GM13976 (cell line): ENCODE measurements at regions of chr20 and their contacts with region 1.

Region 1: DNA sequence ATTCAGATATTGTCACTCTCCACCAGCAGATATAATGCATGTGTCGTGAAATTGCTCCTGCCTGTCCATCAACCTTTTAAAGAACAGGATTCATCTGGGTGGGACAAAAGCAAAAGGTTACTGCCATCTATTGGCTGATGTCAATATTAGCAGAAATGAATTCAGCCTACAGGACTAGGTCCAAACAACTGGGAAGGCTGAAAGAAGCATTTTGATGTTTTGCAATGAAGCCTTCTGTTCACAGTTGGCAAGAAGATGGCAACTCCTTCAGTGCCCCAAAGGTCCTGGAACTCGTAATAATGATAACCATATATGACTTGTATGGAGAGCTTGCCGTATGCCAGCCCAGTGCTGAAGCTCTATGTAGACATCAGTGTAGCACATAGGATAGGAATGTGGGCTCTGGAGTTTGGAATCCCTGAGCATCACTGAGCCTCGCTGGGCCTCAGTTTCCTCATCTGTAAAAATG is 7.5 kb downstream of the BCAS1 start:
- DNase-seq: peak; percentile 60
- CTCF ChIP-seq: peak; percentile 20

Region 2: DNA sequence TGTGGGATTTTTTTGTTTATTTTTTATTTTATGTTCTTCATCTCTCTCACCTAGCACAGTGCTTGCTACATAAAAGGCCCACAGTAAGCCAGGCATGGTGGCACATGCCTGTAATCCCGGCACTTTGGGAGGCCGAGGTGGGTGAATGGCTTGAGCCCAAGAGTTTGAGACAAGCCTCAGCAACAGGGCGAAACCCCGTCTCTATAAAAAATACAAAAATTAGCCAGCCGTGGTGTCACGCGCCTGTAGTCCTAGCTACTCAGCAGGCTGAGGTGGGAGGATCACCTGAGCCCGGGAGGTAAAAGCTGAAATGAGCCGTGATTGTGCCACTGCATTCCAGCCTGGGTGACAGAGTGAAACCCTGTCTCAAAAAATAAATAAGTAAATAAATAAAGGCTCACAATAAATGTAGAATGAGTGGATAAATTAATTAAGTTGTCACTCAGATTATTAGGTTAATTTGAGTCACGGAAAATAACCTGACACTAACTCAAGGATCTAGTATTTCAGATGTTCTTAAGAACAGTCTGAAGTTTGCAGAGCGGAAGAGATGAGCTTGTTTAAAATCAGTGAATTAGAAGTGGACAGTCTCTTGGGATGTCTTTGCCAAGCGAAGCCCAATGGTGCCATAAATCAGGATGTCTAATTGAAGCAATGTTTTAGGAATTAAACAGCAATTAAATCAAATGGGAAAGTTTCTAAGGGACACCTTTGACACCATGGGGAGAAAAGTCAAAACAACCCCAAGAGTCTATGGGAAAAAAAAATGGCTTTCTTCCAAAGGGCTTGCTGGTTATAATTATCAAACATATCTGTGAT is 683.6 kb before region 1 on chr20:
- in situ Hi-C with region 1: no loop called
- DNase-seq: no peak
- CTCF ChIP-seq: no peak

Region 3: DNA sequence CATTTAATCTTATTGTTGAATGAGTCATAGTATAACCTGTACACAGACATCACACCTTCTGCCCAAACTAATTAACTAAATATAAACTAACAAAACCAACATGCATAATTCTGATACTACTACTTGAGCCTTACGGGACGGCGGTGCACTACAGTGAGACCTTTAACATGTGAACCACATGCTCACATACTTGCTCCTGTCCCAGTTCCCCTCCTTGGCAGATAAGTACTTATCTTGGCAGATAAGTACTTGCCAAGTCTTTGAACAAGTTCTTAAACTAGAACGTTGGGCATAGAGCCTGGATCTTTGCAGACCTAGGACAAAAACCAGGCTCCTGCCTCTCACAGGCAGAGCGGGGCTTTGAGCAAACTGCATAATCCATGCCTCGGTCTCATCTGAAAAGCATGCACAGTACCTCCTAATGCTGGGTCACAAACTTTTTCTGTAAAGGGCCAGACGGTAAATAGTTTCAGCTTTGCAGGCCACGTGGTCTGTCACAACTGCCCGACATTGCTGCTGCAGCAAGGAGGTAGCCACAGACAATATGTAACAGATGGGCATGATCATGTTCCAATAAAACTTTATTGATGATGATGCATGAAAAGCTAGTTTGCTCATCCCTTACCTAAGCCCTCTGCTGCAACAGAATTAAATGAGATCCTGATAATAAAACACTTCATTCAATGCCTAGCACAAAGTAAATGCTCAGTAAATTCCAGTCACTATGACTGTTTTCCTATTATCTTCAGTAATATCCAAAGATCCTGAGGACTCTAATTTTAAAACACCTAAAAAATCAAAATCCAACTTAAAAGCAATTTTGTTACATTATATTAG is 492.1 kb before region 1 on chr20:
- in situ Hi-C with region 1: loop called (anchors 25 kb)
- DNase-seq: no peak
- CTCF ChIP-seq: no peak

Region 4: DNA sequence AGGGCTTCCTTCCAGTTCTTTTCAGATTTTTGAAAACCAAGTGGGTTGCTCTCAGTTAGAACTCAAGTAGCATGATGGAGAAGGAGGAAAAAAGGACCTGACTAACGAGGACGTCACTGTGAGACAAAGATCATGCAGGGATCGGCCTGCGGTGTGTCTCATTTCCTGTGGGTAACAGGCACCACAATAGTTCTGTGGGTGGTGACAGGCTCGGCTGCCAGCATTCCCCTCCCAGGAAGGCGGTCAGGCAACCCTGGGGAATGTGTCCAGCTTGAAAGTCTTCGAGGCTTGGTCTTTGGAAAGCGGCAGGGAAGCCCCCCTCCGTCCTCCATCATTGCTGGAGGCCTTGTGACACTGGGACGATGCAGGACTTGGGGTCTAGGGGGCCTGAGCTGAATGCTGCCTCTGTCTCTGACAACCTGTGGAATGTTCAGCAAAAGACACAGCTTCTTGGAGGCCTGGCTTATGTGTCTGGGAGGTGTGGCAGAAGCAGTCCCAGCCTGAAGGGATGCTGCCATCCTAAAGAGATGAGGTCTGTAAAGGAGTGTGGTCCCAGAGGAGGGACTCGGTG is 113.4 kb before region 1 on chr20:
- in situ Hi-C with region 1: loop called (anchors 5 kb)
- DNase-seq: peak; percentile 54
- CTCF ChIP-seq: no peak

Region 5: GRCh38 chr20:54276577-54277194 is 213.8 kb after region 1 on chr20:
- in situ Hi-C with region 1: no loop called
- DNase-seq: no peak
- CTCF ChIP-seq: no peak

Region 6: DNA sequence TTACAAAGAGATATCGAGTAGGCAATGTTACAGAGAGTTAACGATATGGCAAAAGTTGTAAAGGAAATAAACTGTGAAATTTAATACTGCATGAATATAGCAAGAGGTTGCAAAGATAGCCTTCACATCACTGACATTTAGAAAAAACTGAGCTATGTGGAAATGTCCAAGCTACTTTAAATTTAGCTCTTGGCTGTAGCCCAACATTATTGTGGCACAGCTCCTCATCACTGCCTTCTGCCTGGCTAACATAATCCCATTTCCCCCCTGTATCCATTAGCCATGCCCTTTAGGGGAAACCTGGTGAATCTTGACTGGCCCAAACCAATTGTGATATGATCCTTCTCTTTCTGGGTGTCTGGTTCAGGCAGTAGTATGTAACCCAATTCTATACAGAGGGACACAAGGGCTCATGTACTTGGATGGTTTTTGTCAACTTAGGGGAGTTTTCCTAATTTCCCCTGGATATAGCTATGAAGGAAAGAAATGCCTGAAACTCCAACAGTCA is 260.4 kb after region 1 on chr20:
- in situ Hi-C with region 1: no loop called
- DNase-seq: no peak
- CTCF ChIP-seq: no peak